ENCODE measurements at regions of chr20 and their contacts with region 1.

Region 1: DNA sequence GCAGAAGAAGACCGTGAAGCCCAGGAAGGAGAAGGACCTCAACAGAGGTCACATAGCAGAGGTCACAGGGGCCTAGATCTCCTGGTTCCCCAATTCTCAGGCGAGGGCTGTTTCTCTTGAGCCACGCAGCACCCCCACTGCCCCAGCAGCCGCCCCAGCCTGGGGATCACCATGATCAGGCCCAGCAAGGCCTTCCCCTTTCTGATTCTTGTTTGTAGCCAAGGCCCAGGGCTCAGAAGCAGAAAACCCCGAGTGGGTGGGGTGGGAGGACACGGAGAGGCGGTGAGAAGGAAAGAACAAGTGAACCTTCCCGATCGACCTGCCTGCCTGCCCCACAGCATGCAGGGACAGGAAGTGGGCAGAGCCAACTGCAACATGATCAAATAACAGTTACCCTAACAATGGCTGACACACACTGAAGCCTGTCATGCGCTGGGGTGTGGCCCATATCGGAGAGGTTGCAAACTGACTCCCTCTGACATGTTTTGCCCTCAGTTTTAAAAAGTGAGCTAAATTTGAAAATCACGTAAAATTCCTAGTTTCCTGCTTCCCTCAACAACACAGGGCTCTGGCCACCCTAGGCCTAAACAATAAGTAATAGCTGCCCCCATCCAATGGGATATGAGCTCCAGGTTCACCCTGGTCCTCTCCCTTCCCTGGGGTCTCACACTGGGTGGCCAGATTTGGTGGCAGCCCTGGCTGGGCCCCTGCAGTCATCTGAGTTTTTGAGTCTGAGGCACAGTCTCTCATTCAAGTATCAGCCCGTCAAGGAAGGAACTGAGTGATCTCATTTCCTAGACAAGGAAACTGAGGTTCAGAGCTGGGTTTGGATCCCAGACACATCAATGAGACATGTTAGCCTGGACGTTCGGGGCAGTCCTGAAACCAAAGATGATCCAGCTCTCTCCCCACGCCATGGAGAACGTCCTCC is 6.5 kb downstream of the PEDS1 start:
- DNase-seq: peak; percentile 85
- H3K4me3 Mint-ChIP-seq: peak overlapping the region; percentile 76
- H3K27ac Mint-ChIP-seq: peak overlapping the region; percentile 96
- H3K4me1 Mint-ChIP-seq: peaks cover 76% of the 10 kb centered on the region
- H3K27me3 Mint-ChIP-seq: no peaks in the 10 kb centered on the region

Region 2: GRCh38 chr20:49501917-49502316 is 645.1 kb before region 1 on chr20:
- CTCF ChIA-PET with region 1: no interaction called
- POLR2A ChIA-PET with region 1: no interaction called
- DNase-seq: no peak
- H3K4me3 Mint-ChIP-seq: no peak overlapping the region
- H3K27ac Mint-ChIP-seq: no peak overlapping the region
- H3K4me1 Mint-ChIP-seq: no peaks in the 10 kb centered on the region
- H3K27me3 Mint-ChIP-seq: peaks cover 38% of the 10 kb centered on the region

Region 3: DNA sequence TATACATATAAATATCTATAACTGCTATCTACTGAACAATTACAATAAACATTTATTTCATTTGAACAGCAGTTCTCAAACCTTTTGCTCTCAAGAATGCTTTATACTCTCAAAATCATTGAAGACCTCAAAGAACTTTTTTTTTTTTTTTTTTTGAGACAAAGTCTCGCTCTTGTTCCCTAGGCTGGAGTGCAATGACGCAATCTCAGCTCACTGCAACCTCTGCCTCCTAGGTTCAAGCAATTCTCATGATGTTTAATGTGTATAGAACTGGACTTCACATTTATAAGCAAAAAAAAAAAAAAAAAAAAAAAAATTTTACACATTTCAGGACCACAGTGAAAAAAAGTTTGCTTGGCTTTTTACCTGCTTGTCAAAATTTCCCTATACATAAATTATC is 45.7 kb before region 1 on chr20:
- CTCF ChIA-PET with region 1: no interaction called
- POLR2A ChIA-PET with region 1: no interaction called
- DNase-seq: no peak
- H3K4me3 Mint-ChIP-seq: no peak overlapping the region
- H3K27ac Mint-ChIP-seq: no peak overlapping the region
- H3K4me1 Mint-ChIP-seq: peaks cover 44% of the 10 kb centered on the region
- H3K27me3 Mint-ChIP-seq: no peaks in the 10 kb centered on the region

Region 4: DNA sequence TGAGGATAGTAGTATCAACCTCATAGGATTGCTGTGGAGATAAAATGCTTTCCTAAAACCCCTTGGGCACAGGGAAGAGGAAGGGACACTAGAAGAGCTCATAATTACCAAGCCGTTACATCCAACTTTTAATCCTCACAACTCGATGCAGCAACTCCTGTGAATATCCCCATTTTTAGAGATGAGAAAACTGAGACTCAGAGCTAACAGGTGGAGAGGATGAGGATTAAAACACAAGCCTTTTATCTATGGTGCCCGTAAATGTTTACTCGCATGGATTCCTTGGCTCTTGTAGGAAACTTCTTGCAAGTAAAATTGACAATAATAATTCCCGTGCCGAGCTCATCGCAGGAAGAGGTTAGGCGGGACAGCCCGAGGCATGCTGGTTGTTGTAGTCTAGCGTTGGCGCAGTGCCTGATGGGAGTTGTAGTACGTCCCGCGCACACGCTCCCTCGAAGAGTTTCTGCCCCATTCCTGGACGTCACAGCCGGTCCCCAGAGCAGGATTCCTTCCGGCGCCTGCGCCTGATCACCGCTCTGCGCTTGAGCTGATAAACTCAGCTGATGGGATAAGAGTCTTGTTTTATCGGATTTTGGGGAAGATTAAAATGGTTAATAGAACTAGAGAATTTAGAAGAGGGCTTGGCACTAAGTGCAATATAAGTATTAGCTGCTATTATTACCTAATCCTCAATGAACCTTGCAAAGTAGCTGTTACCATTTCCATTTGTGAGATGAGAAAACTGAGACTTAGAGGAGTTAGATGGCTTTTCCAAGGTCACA is 31.2 kb before region 1 on chr20:
- CTCF ChIA-PET with region 1: interaction called, 55 read pairs
- POLR2A ChIA-PET with region 1: interaction called, 73 read pairs
- DNase-seq: peak; percentile 91
- H3K4me3 Mint-ChIP-seq: peak overlapping the region; percentile 80
- H3K27ac Mint-ChIP-seq: peak overlapping the region; percentile 85
- H3K4me1 Mint-ChIP-seq: peaks cover 52% of the 10 kb centered on the region
- H3K27me3 Mint-ChIP-seq: no peaks in the 10 kb centered on the region

Region 5: DNA sequence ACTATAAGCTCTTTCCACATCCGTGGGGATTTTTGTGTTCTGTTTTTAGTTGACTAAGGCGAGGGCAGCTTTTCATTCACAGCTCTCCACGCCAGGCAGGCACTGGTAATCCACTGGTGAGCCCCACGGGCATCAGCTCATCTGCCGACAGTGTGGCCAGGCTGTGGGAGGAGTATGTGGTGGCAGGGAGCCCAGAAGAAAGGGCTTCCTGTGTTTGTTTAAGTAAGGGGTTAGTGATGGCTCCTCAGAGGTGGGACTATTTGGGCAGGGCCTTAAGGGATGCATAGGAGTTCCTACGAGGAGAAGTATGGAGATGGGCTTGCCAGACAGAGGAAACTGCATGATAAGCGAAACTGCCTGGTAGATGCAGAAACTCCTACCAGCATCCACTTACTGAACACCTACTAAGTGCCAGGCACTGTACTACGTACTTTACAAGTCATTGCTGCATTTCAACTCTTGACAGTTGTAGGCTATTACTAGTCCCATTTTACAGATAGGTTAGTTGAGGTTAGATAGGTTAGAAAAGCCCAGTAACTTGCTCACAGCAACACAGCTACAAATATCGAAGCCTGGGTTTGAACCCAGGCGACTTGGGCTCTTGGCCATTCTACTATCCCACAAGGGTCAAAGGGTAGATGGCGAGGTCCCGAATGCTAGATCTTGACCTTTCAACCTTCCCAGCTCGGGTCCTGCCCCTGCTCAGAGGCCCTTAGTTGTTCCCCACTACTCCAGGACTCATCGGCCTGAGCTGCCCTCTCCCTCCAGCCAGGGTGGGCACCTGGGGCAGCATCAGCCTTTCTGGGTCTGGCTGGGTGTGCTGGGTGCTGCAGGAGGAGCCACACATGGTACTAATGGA is 98.7 kb after region 1 on chr20:
- CTCF ChIA-PET with region 1: no interaction called
- POLR2A ChIA-PET with region 1: no interaction called
- DNase-seq: no peak
- H3K4me3 Mint-ChIP-seq: no peak overlapping the region
- H3K27ac Mint-ChIP-seq: no peak overlapping the region
- H3K4me1 Mint-ChIP-seq: peaks cover 4% of the 10 kb centered on the region
- H3K27me3 Mint-ChIP-seq: peaks cover 8% of the 10 kb centered on the region

Region 6: GRCh38 chr20:50478162-50479036 is 331.4 kb after region 1 on chr20:
- CTCF ChIA-PET with region 1: no interaction called
- POLR2A ChIA-PET with region 1: no interaction called
- DNase-seq: peak; percentile 83
- H3K4me3 Mint-ChIP-seq: no peak overlapping the region
- H3K27ac Mint-ChIP-seq: no peak overlapping the region
- H3K4me1 Mint-ChIP-seq: peaks cover 60% of the 10 kb centered on the region
- H3K27me3 Mint-ChIP-seq: no peaks in the 10 kb centered on the region

Measured in activated CD4-positive, alpha-beta memory T cell treated with anti-CD3 and anti-CD28 coated beads, Interleukin-2, amount 10 ng/mL, durations not matched to agents 7 days and 5 days (primary cell).